Heart left ventricle (tissue), 16 donors: ENCODE measurements at regions of chr18 and their contacts with region 1.

Region 1: DNA sequence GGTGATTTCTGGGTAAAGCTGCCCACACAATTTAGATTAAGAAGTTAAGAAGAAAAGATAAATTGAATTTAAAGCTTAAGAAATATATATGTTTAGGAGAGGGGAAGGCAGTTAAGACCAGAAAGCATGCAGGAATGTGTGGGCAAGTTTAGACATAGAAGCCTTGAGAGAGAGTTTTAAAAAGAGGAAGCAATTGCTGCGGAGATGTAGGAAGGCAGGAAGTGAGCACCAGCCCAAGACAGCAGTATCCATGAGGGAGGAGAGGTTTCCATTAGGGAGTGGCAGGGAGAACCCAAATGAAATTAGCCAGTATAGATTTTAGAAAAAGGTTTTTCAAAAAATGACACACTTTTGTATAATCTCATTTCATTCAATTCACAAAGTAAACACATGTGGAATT is 24.3 kb downstream of the DSC2 start:
- DNase-seq: no peak
- ATAC-seq: no peak
- H3K4me3 ChIP-seq: no peak overlapping the region
- H3K27ac ChIP-seq: no peak overlapping the region
- H3K4me1 ChIP-seq: no peaks in the 10 kb centered on the region
- H3K27me3 ChIP-seq: no peaks in the 10 kb centered on the region
- CTCF ChIP-seq: no peak
- POLR2A ChIP-seq: no peak

Region 2: DNA sequence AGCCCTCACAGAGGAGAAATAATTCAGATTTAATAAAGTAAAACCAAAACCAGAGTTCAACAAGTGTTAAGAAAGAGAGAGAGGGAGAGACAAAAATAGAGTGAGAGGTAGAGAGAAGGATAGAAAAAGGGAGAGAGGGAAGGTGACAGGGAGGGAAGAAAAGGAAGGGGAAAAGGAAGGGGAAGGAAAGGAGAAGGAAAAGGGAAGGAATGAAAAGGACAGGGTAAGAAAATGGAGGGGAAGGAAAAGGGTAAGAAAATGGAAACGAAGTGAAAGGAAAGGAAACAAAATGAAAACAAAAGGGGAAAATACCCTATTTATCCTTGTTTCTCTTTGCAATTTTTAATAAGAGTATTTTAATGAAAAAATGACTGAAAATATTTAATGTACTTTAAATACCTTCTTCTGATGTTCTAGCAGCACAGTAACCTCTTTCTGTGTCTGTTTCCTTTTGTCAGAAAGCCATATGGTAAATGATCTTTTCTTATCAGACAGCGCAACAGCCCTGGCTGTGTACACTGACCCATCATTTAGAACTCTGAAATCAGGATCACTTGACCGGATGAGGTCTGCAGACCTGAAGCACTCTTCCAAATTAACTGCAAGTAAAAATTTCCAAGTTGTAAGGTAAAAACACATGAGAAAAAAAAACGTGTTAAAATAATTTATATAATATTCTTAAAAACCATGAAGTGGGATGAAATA is 47.2 kb before region 1 on chr18:
- intact Hi-C with region 1: loop called in 1 of 10 experiments (anchors 10 kb)
- DNase-seq: no peak
- ATAC-seq: no peak
- H3K4me3 ChIP-seq: no peak overlapping the region
- H3K27ac ChIP-seq: no peak overlapping the region
- H3K4me1 ChIP-seq: no peaks in the 10 kb centered on the region
- H3K27me3 ChIP-seq: peaks cover 0 to under 1% (median 0%) of the 10 kb centered on the region in 9 donors
- CTCF ChIP-seq: no peak
- POLR2A ChIP-seq: no peak